H1 (cell line): ENCODE measurements at regions of chr10 and their contacts with region 1.

Region 1: GRCh38 chr10:17200912-17201793 is at the start of gene TRDMT1:
- DNase-seq: peak; percentile 71 to 90
- H3K4me3 ChIP-seq: peak within 1 kb of the TSS; percentile 69 to 84 (median 78)
- H3K27ac ChIP-seq: peak within 1 kb of the TSS; percentile 83
- H3K4me1 ChIP-seq: peaks cover 0 to 16% (median 10%) of the 10 kb centered on the region in 4 experiments; a peak in 4 of 7 replicates
- H3K27me3 ChIP-seq: no peaks in the 10 kb centered on the region
- CTCF ChIP-seq: no peak
- EP300 ChIP-seq: no peak
- POLR2A ChIP-seq: peak; percentile 55 to 80
- RAD21 ChIP-seq: peak in 1 of 2 experiments; percentile 31; a peak in 1 of 4 replicates
- total RNA-seq, gene TRDMT1: 20.2 and 21.4 TPM in 2 replicates

Region 2: DNA sequence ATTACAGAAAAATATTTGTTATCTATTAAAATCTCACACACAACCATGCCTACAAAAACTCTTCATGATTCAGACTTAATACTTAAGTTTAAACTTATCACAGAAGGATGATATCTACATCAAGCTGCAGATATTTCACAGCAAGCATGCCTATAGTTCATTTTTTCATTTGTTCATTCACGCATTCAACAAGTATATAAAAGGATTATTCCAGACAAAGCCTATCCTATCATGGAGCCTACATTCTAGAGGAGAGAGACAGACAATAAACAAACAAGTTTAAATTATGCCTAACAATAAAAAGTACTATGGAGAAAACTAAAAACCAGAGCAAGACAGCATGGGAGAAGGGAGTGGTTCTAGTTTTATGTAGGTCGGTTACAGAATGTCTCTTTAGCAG is 10.6 kb before region 1 on chr10:
- CTCF ChIA-PET with region 1: interaction called, 3 read pairs
- POLR2A ChIA-PET with region 1: interaction called, 12 read pairs
- DNase-seq: no peak
- H3K4me3 ChIP-seq: no peak overlapping the region
- H3K27ac ChIP-seq: no peak overlapping the region
- H3K4me1 ChIP-seq: peaks cover 0 to 6% (median 0%) of the 10 kb centered on the region in 4 experiments; a peak in 1 of 7 replicates
- H3K27me3 ChIP-seq: no peaks in the 10 kb centered on the region
- CTCF ChIP-seq: no peak
- EP300 ChIP-seq: no peak
- POLR2A ChIP-seq: no peak
- RAD21 ChIP-seq: no peak

Region 3: GRCh38 chr10:17216217-17216900 is 15.2 kb after region 1 on chr10:
- CTCF ChIA-PET with region 1: interaction called, 3 read pairs
- POLR2A ChIA-PET with region 1: interaction called, 15 read pairs
- DNase-seq: no peak
- H3K4me3 ChIP-seq: no peak overlapping the region
- H3K27ac ChIP-seq: no peak overlapping the region
- H3K4me1 ChIP-seq: peaks cover 0 to 9% (median 7%) of the 10 kb centered on the region in 4 experiments; a peak in 4 of 7 replicates
- H3K27me3 ChIP-seq: no peaks in the 10 kb centered on the region
- CTCF ChIP-seq: no peak
- EP300 ChIP-seq: no peak
- POLR2A ChIP-seq: no peak
- RAD21 ChIP-seq: no peak

Region 4: DNA sequence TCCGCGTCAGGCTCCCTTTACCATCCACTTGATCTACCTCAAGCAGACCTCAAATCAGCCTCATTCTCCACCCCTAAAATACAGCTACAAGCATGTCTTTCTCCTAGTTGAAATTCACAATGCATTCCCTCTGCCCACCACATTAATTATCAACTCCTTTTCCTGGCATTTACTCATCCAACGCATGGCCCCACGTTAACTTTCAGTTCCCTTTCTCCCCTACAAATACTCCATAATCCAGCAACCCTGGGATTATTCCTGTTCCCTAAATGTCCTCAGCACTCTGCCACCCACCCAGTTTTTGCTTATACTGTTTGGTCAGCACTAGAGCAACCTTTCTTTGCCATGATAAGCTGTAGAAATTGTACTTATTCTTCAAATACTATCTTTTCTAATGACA is 21.2 kb after region 1 on chr10:
- CTCF ChIA-PET with region 1: interaction called, 3 read pairs
- POLR2A ChIA-PET with region 1: interaction called, 46 read pairs
- DNase-seq: no peak
- H3K4me3 ChIP-seq: no peak overlapping the region
- H3K27ac ChIP-seq: no peak overlapping the region
- H3K4me1 ChIP-seq: peaks cover 3 to 8% (median 7%) of the 10 kb centered on the region in 4 experiments; a peak in 6 of 7 replicates
- H3K27me3 ChIP-seq: peaks cover 0 to 3% (median 1%) of the 10 kb centered on the region in 4 experiments; a peak in 2 of 7 replicates
- CTCF ChIP-seq: no peak
- EP300 ChIP-seq: no peak
- POLR2A ChIP-seq: no peak
- RAD21 ChIP-seq: no peak

Region 5: DNA sequence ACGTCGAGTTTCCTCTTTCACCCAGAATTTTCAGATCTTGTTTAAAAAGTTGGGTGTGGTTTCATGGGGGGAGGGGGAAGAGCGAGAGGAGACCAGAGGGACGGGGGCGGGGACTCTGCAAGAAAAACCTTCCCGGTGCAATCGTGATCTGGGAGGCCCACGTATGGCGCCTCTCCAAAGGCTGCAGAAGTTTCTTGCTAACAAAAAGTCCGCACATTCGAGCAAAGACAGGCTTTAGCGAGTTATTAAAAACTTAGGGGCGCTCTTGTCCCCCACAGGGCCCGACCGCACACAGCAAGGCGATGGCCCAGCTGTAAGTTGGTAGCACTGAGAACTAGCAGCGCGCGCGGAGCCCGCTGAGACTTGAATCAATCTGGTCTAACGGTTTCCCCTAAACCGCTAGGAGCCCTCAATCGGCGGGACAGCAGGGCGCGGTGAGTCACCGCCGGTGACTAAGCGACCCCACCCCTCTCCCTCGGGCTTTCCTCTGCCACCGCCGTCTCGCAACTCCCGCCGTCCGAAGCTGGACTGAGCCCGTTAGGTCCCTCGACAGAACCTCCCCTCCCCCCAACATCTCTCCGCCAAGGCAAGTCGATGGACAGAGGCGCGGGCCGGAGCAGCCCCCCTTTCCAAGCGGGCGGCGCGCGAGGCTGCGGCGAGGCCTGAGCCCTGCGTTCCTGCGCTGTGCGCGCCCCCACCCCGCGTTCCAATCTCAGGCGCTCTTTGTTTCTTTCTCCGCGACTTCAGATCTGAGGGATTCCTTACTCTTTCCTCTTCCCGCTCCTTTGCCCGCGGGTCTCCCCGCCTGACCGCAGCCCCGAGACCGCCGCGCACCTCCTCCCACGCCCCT is 27.2 kb after region 1 on chr10 and contains the start of gene VIM:
- CTCF ChIA-PET with region 1: interaction called, 17 read pairs
- POLR2A ChIA-PET with region 1: interaction called, 46 read pairs
- DNase-seq: peak; percentile 79 to 82
- H3K4me3 ChIP-seq: peak within 1 kb of the TSS; percentile 69 to 81 (median 78)
- H3K27ac ChIP-seq: no peak within 1 kb of the TSS
- H3K4me1 ChIP-seq: peaks cover 10 to 17% (median 12%) of the 10 kb centered on the region in 4 experiments; a peak in 6 of 7 replicates
- H3K27me3 ChIP-seq: peaks cover 0 to 15% (median 13%) of the 10 kb centered on the region in 4 experiments; a peak in 5 of 7 replicates
- CTCF ChIP-seq: no peak
- EP300 ChIP-seq: peak in 1 of 2 experiments; percentile 18; a peak in 1 of 3 replicates
- POLR2A ChIP-seq: no peak
- RAD21 ChIP-seq: no peak
- total RNA-seq, gene VIM: 372 and 377 TPM in 2 replicates